GM18951 (cell line): ENCODE measurements at regions of chr5 and their contacts with region 1.

Region 1: DNA sequence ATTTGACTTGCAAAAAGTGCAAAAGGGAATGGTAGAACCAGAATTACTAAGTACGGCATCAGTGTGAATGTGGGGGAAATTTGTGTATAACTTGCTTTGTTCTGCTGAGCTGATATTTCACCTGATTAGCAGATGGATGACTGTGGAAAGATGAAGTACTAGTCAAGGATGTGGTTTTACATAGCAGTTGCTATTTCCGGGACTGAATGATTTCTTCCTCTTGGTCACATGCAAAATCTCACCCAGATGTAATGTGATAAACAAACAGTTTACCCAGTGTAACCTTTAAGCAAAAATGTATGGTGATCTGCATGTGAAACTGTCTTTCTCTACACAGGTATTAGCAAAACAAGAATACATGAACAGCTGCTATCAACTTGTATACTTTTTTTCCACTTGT is 46.1 kb downstream of the DCP2 start:
- POLR2A ChIP-seq: no peak

Region 2: DNA sequence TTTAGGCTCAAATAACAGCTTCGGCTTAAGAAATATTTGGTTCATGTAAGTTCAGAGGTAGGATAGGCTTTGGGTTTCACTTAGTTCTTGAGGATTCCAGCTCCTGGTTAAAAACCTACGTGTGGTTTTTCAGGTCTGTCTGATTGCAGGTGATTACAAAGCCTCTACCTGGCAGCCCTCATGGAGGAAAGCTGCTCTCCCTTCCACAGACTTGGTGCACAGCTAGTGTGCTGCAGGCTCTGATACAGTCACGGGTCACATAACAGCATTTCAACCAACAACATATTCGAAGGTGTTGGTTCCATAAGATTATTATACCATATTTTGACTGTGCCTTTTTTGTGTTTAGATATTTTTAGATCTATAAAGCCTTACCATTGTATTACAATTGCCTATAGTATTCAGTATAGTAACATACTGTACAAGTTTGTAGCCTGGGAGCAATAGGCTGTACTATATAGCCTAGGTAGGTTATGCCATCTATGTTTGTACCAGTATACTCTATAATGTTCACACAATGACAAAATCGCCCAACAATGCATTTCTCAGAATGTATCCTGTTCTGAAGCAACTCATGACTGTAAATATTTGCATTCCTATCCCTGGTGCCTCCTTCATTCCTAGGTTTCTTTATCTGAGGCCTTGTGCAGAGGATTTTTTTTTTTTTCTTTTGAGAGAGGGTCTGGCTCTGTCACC is 54.1 kb before region 1 on chr5:
- in situ Hi-C with region 1: no loop called
- POLR2A ChIP-seq: no peak

Region 3: GRCh38 chr5:113513384-113514288 is 491.0 kb after region 1 on chr5 and contains the start of gene YTHDC2:
- in situ Hi-C with region 1: loop called (anchors 25 kb)
- POLR2A ChIP-seq: peak; percentile 92